A673 (cell line): ENCODE measurements at regions of chr16 and their contacts with region 1.

Region 1: GRCh38 chr16:78770353-78771091 is 671.1 kb downstream of the WWOX start:
- DNase-seq: peak; percentile 82
- H3K4me3 ChIP-seq: no peak overlapping the region
- H3K27ac ChIP-seq: no peak overlapping the region
- H3K4me1 ChIP-seq: no peaks in the 10 kb centered on the region
- H3K27me3 ChIP-seq: no peaks in the 10 kb centered on the region
- CTCF ChIP-seq: peak; percentile 83

Region 2: DNA sequence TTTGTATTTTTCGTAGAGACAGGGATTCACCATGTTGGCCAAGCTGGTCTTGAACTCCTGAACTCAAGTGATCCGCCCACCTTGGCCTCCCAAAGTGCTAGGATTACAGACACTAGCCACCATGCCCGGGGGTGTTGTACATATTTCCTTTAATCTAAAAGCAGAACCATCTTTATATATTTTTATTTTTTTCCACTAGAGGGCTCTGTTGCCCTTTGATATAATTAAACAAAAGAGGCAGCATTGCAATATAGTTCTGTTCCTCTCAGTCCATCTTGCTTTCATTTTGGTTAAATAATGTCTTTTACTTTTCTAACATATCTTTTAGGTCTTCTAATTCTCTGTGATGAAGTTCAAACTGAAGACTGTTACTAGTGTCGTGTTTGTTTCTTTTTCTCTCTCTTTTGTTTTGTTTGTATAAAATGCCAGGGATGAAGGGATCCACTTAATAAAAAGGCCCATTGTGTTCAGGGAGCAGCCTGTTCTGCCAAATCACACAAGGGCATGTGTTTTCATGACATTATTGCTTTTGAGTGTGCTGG is 647.7 kb before region 1 on chr16:
- CTCF ChIA-PET with region 1: no interaction called
- POLR2A ChIA-PET with region 1: no interaction called
- intact Hi-C with region 1: loop called (anchors 10 kb)
- DNase-seq: peak; percentile 81
- H3K4me3 ChIP-seq: no peak overlapping the region
- H3K27ac ChIP-seq: no peak overlapping the region
- H3K4me1 ChIP-seq: peaks cover 20% of the 10 kb centered on the region
- H3K27me3 ChIP-seq: no peaks in the 10 kb centered on the region
- CTCF ChIP-seq: peak; percentile 54

Region 3: DNA sequence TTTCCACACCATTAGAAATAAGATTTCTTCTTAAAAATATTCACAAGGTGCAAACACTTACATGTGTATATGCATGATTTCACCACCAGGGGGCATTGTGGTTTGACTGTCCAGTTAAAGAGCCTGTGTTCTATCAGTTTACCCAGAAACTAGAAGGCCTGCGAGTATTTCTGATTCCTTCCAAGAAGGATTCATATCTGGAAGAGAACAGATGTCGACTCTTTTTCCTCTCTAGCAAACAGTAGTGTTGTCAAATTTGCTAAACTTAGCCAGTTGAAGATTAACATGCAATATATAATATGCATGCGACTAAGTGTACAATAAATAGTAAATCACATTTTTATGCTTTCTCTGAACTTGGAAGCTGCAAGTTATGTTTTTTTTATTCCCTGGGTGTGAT is 266.9 kb before region 1 on chr16:
- CTCF ChIA-PET with region 1: no interaction called
- POLR2A ChIA-PET with region 1: no interaction called
- intact Hi-C with region 1: loop called (anchors 2 kb)
- DNase-seq: peak; percentile 33
- H3K4me3 ChIP-seq: no peak overlapping the region
- H3K27ac ChIP-seq: no peak overlapping the region
- H3K4me1 ChIP-seq: no peaks in the 10 kb centered on the region
- H3K27me3 ChIP-seq: no peaks in the 10 kb centered on the region
- CTCF ChIP-seq: peak; percentile 68

Region 4: GRCh38 chr16:78570399-78571141 is 200.0 kb before region 1 on chr16:
- CTCF ChIA-PET with region 1: interaction called, 13 read pairs
- POLR2A ChIA-PET with region 1: no interaction called
- intact Hi-C with region 1: no loop called
- DNase-seq: no peak
- H3K4me3 ChIP-seq: no peak overlapping the region
- H3K27ac ChIP-seq: no peak overlapping the region
- H3K4me1 ChIP-seq: no peaks in the 10 kb centered on the region
- H3K27me3 ChIP-seq: no peaks in the 10 kb centered on the region
- CTCF ChIP-seq: no peak

Region 5: GRCh38 chr16:79451196-79451816 is 680.8 kb after region 1 on chr16:
- CTCF ChIA-PET with region 1: no interaction called
- POLR2A ChIA-PET with region 1: no interaction called
- intact Hi-C with region 1: no loop called
- DNase-seq: no peak
- H3K4me3 ChIP-seq: no peak overlapping the region
- H3K27ac ChIP-seq: no peak overlapping the region
- H3K4me1 ChIP-seq: no peaks in the 10 kb centered on the region
- H3K27me3 ChIP-seq: no peaks in the 10 kb centered on the region
- CTCF ChIP-seq: no peak